ENCODE measurements at regions of chr19 and their contacts with region 1.

Region 1: GRCh38 chr19:54189735-54190502 is 539 bp upstream of the MBOAT7 start:
- DNase-seq: peak; percentile 100
- H3K4me3 ChIP-seq: peak overlapping the region; percentile 57 to 76
- H3K4me3 Mint-ChIP-seq: peak overlapping the region; percentile 90 to 99 (median 96)
- H3K27ac ChIP-seq: peak overlapping the region; percentile 99
- H3K27ac Mint-ChIP-seq: peak overlapping the region; percentile 94 to 100 (median 99)
- H3K4me1 ChIP-seq: peaks cover 30% of the 10 kb centered on the region
- H3K4me1 Mint-ChIP-seq: peaks cover 15 to 54% (median 32%) of the 10 kb centered on the region in 4 donors
- H3K27me3 ChIP-seq: no peaks in the 10 kb centered on the region
- H3K27me3 Mint-ChIP-seq: no peaks in the 10 kb centered on the region

Region 2: DNA sequence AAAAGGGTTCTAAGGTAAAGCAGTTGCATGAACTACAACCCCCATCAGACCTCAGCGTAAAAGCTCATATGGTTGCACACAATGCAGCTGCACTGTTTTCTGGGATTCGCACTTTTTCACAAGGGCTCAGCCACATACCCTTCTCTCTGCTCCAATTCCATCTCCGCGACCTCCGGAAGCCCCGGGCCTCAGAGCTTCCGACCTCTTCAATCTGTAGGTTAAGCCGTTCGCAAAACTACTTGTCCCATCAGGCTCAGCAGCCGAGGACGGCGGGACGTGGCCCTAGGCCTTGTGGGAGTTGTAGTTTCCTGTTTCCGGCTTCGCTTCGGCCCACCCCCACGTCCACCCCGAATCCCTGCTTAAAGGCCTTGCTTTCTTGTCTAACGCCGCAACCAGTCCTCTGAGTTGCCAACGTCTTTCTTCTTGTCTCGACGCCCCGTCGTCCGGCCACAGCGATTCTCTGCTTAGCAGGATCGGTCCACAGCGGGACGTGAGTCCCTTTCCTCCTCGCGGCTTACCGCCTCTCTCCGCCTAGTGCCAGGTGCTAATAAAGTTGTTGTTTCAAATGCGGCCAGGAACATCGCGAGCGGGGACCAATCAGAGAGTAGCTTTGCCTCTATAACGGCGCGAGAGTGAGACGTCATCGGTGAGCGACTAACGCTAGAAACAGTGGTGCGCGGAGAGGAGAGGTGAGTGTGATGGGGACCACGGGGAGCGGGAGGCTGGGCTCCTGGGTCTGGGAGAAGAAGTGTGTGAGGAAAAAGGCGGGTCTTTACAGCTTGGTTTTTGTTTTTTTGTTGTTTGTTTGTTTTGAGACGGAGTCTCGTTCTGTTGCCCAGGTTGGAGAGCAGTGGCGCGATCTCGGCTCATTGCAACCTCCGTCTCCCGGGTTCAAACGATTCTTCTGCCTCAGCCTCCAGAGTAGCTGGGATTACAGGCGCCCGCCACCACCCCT is 74.5 kb before region 1 on chr19 and contains the starts of genes PRPF31 and TFPT:
- CTCF ChIA-PET with region 1: no interaction called
- POLR2A ChIA-PET with region 1: interaction called, 45 read pairs
- intact Hi-C with region 1: loop called (anchors 1 kb)
- DNase-seq: peak; percentile 97 to 98 (median 97)
- H3K4me3 ChIP-seq: peak within 1 kb of the TSS; percentile 80 to 81
- H3K4me3 Mint-ChIP-seq: peak within 1 kb of the TSS; percentile 86 to 99 (median 95)
- H3K27ac ChIP-seq: peak within 1 kb of the TSS; percentile 75
- H3K27ac Mint-ChIP-seq: peak within 1 kb of the TSS; percentile 91 to 97 (median 95)
- H3K4me1 ChIP-seq: peaks cover 27% of the 10 kb centered on the region
- H3K4me1 Mint-ChIP-seq: peaks cover 22 to 44% (median 28%) of the 10 kb centered on the region in 4 donors
- H3K27me3 ChIP-seq: no peaks in the 10 kb centered on the region
- H3K27me3 Mint-ChIP-seq: peaks cover 0 to 2% of the 10 kb centered on the region in 2 donors
- total RNA-seq, gene PRPF31: 77.6 to 80.0 TPM
- total RNA-seq, gene TFPT: 17.2 to 19.0 TPM

Region 3: GRCh38 chr19:54128796-54129616 is 60.9 kb before region 1 on chr19:
- CTCF ChIA-PET with region 1: no interaction called
- POLR2A ChIA-PET with region 1: no interaction called
- intact Hi-C with region 1: no loop called
- DNase-seq: no peak
- H3K4me3 ChIP-seq: no peak overlapping the region
- H3K4me3 Mint-ChIP-seq: no peak overlapping the region
- H3K27ac ChIP-seq: no peak overlapping the region
- H3K27ac Mint-ChIP-seq: no peak overlapping the region
- H3K4me1 ChIP-seq: no peaks in the 10 kb centered on the region
- H3K4me1 Mint-ChIP-seq: no peaks in the 10 kb centered on the region
- H3K27me3 ChIP-seq: no peaks in the 10 kb centered on the region
- H3K27me3 Mint-ChIP-seq: no peaks in the 10 kb centered on the region

Region 4: DNA sequence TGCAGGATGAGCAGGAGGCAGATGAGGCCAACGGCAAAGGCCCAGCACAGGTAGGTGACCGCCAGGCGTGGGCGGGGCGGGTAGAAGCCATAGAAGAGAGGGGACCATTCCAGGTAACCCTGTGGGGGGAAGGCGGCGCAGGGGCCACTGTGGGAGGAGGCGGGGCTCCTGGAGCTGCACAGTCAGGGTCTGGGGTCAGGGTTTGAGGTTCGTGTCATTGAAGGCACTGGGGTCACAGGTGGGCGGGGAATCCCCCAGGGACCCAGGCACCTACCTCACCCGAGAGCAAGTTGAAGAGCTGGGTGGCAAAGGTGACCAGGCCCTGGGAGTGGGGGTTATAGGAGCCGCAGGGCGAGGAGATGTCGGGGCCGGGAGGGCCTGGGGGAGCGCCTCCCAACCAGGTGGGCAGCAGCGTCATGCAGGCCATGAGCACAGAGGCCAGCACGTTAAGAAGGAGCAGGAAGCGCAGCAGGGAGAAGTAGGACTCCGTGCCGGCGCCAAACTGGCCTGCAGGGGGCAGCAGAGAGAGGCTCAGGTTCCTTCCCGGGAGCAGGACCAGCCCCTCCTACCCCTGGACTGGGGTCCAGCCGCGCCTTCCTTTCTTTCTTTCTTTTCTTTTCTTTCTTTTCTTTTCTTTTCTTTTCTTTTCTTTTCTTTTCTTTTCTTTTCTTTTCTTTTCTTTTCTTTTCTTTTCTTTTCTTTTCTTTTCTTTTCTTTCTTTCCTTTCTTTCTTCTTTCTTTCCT is 21.6 kb before region 1 on chr19:
- CTCF ChIA-PET with region 1: interaction called, 37 read pairs
- POLR2A ChIA-PET with region 1: interaction called, 20 read pairs
- intact Hi-C with region 1: no loop called
- DNase-seq: peak; percentile 79 to 83 (median 81)
- H3K4me3 ChIP-seq: no peak overlapping the region
- H3K4me3 Mint-ChIP-seq: peak overlapping the region in 2 of 8 donors; percentile 26 to 31
- H3K27ac ChIP-seq: no peak overlapping the region
- H3K27ac Mint-ChIP-seq: peak overlapping the region in 2 of 7 donors; percentile 41 to 58
- H3K4me1 ChIP-seq: peaks cover 23% of the 10 kb centered on the region
- H3K4me1 Mint-ChIP-seq: peaks cover 3 to 28% (median 11%) of the 10 kb centered on the region in 4 donors
- H3K27me3 ChIP-seq: no peaks in the 10 kb centered on the region
- H3K27me3 Mint-ChIP-seq: no peaks in the 10 kb centered on the region

Region 5: GRCh38 chr19:54209811-54210494 is 20.0 kb after region 1 on chr19:
- CTCF ChIA-PET with region 1: interaction called, 56 read pairs
- POLR2A ChIA-PET with region 1: interaction called, 256 read pairs
- intact Hi-C with region 1: loop called (anchors 2 kb)
- DNase-seq: peak in 3 of 5 donors; percentile 23 to 68 (median 27)
- H3K4me3 ChIP-seq: no peak overlapping the region
- H3K4me3 Mint-ChIP-seq: peak overlapping the region in 7 of 8 donors; percentile 37 to 74 (median 73)
- H3K27ac ChIP-seq: peak overlapping the region; percentile 7
- H3K27ac Mint-ChIP-seq: peak overlapping the region; percentile 69 to 100 (median 92)
- H3K4me1 ChIP-seq: peaks cover 64% of the 10 kb centered on the region
- H3K4me1 Mint-ChIP-seq: peaks cover 38 to 65% (median 49%) of the 10 kb centered on the region in 4 donors
- H3K27me3 ChIP-seq: no peaks in the 10 kb centered on the region
- H3K27me3 Mint-ChIP-seq: no peaks in the 10 kb centered on the region

Region 6: DNA sequence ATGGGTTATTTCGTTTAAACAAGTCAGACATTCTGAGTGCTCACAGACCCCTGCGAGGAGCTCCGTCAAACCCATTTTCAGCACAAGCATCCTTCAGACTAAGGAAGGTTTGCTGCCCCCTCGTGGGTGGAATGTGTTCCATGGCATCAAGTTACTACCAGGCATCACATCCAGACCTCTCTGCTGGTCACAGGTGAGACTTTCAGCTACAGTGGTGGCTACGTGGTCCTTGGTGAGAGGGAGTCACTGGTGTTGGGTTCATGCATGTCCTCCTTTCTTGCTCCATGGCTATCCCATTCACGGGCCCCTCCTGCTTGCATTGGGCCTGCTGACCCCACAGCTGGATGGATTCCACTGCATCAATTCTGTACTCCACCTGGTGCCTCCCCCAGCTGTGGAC is 76.2 kb after region 1 on chr19:
- CTCF ChIA-PET with region 1: interaction called, 20 read pairs
- POLR2A ChIA-PET with region 1: interaction called, 5 read pairs
- intact Hi-C with region 1: no loop called
- DNase-seq: peak; percentile 42 to 67 (median 50)
- H3K4me3 ChIP-seq: no peak overlapping the region
- H3K4me3 Mint-ChIP-seq: peak overlapping the region in 1 of 8 donors; percentile 52
- H3K27ac ChIP-seq: no peak overlapping the region
- H3K27ac Mint-ChIP-seq: no peak overlapping the region
- H3K4me1 ChIP-seq: no peaks in the 10 kb centered on the region
- H3K4me1 Mint-ChIP-seq: peaks cover 0 to 2% (median 0%) of the 10 kb centered on the region in 4 donors
- H3K27me3 ChIP-seq: no peaks in the 10 kb centered on the region
- H3K27me3 Mint-ChIP-seq: peaks cover 6 to 22% of the 10 kb centered on the region in 2 donors

Region 7: DNA sequence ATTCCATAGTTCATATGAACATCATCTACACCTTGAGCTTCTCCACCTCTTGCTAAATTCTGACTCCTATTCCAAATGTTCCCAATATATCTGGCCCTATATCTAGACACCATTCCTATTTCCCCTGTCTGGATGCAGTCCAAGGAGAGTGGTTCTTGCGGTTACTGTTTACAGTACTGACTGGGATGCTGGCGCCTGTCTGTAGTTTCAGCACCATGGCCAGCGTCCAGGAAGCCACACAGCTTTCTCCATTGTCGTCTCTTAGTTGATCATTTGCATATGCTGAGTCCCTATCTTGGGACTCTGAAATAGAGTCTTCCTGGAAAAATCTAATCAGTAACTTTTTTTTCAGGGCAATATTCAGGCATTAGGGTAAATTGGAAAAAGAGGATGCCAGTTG is 327.6 kb after region 1 on chr19:
- CTCF ChIA-PET with region 1: no interaction called
- POLR2A ChIA-PET with region 1: no interaction called
- intact Hi-C with region 1: no loop called
- DNase-seq: peak in 4 of 5 donors; percentile 36 to 51 (median 41)
- H3K4me3 ChIP-seq: no peak overlapping the region
- H3K4me3 Mint-ChIP-seq: no peak overlapping the region
- H3K27ac ChIP-seq: no peak overlapping the region
- H3K27ac Mint-ChIP-seq: peak overlapping the region in 1 of 7 donors; percentile 28
- H3K4me1 ChIP-seq: peaks cover 33% of the 10 kb centered on the region
- H3K4me1 Mint-ChIP-seq: peaks cover 15 to 38% (median 18%) of the 10 kb centered on the region in 4 donors
- H3K27me3 ChIP-seq: no peaks in the 10 kb centered on the region
- H3K27me3 Mint-ChIP-seq: peaks cover 12 to 37% of the 10 kb centered on the region in 2 donors

Region 8: GRCh38 chr19:56121180-56122167 is 1931.6 kb after region 1 on chr19 and contains the start of gene ZNF787:
- CTCF ChIA-PET with region 1: no interaction called
- POLR2A ChIA-PET with region 1: no interaction called
- intact Hi-C with region 1: loop called (anchors 5 kb)
- DNase-seq: peak; percentile 95 to 98 (median 98)
- H3K4me3 ChIP-seq: peak within 1 kb of the TSS; percentile 60 to 67
- H3K4me3 Mint-ChIP-seq: peak within 1 kb of the TSS; percentile 86 to 97 (median 88)
- H3K27ac ChIP-seq: peak within 1 kb of the TSS; percentile 92
- H3K27ac Mint-ChIP-seq: peak within 1 kb of the TSS; percentile 89 to 97 (median 96)
- H3K4me1 ChIP-seq: peaks cover 19% of the 10 kb centered on the region
- H3K4me1 Mint-ChIP-seq: peaks cover 21 to 49% (median 37%) of the 10 kb centered on the region in 4 donors
- H3K27me3 ChIP-seq: no peaks in the 10 kb centered on the region
- H3K27me3 Mint-ChIP-seq: no peaks in the 10 kb centered on the region
- total RNA-seq, gene ZNF787: 29.6 to 34.1 TPM

Measured in CD4-positive, alpha-beta memory T cell (primary cell).